ENCODE measurements at regions of chr11 and their contacts with region 1.

Region 1: GRCh38 chr11:72030472-72031045 is 31.9 kb downstream of the IL18BP start:
- DNase-seq: no peak
- ATAC-seq: no peak
- H3K4me3 ChIP-seq: no peak overlapping the region
- H3K27ac ChIP-seq: peak overlapping the region in 1 of 4 donors; percentile 35
- H3K4me1 ChIP-seq: peaks cover 26 to 62% of the 10 kb centered on the region in 2 donors
- H3K27me3 ChIP-seq: no peaks in the 10 kb centered on the region
- CTCF ChIP-seq: no peak
- POLR2A ChIP-seq: no peak

Region 2: DNA sequence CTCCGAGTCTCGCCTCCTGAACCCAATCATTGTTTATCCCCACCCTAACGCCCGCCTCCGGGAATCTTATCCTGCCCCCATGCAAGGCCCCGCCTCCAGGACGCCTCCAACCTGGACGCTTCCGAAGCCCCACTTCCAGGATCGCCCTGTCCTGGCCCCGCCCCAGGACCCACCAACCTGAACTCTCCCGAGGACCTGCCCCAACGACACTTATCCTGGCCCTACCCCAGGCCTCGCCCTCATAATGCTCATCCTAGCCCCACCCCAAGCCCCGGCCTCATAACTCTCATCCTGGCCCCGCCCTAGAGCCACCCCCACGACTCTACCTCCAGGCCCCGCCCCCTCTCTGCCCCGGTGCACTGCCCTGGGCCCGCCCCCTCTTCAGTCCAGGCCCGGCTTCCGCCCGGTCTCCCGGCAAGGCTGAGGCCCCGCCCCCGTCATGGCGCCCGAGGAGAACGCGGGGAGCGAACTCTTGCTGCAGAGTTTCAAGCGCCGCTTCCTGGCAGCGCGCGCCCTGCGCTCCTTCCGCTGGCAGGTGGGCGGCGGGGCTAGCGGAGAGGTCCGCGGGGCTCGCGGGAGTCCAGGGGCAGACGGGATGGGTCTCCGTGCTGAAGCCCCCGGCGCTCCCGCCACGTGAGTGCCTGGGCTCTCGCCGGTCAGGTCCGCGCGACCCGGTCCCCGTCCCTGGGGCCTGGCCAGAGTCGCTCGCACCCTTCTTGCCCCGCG is 243.3 kb before region 1 on chr11:
- in situ Hi-C with region 1: no loop called
- intact Hi-C with region 1: loop called (anchors 10 kb)
- DNase-seq: peak; percentile 21 to 91
- ATAC-seq: peak; percentile 99 to 100
- H3K4me3 ChIP-seq: peak overlapping the region; percentile 63 to 85 (median 78)
- H3K27ac ChIP-seq: peak overlapping the region; percentile 73 to 92 (median 88)
- H3K4me1 ChIP-seq: peaks cover 6% of the 10 kb centered on the region in 2 donors
- H3K27me3 ChIP-seq: no peaks in the 10 kb centered on the region
- CTCF ChIP-seq: no peak
- POLR2A ChIP-seq: peak; percentile 62 to 65

Measured in gastrocnemius medialis (tissue), 4 donors.